ENCODE measurements at regions of chr2 and their contacts with region 1.

Region 1: GRCh38 chr2:100610381-100610831 is 47.6 kb downstream of the PDCL3 start:
- ATAC-seq: peak; percentile 96 to 98 (median 96)
- H3K4me3 ChIP-seq: no peak overlapping the region
- H3K27ac ChIP-seq: no peak overlapping the region
- H3K4me1 ChIP-seq: no peaks in the 10 kb centered on the region

Region 2: GRCh38 chr2:100703213-100703612 is 92.8 kb after region 1 on chr2:
- in situ Hi-C with region 1: loop called in 1 of 9 experiments (anchors 25 kb)
- ATAC-seq: no peak
- H3K4me3 ChIP-seq: no peak overlapping the region
- H3K27ac ChIP-seq: no peak overlapping the region
- H3K4me1 ChIP-seq: no peaks in the 10 kb centered on the region

Region 3: GRCh38 chr2:100984892-100985379 is 374.5 kb after region 1 on chr2:
- in situ Hi-C with region 1: loop called (anchors 10 to 25 kb)
- ATAC-seq: peak; percentile 71 to 91 (median 74)
- H3K4me3 ChIP-seq: no peak overlapping the region
- H3K27ac ChIP-seq: no peak overlapping the region
- H3K4me1 ChIP-seq: peaks cover 6 to 15% of the 10 kb centered on the region in 2 donors

Region 4: GRCh38 chr2:100992262-100992661 is 381.9 kb after region 1 on chr2:
- in situ Hi-C with region 1: loop called (anchors 10 to 25 kb)
- ATAC-seq: no peak
- H3K4me3 ChIP-seq: no peak overlapping the region
- H3K27ac ChIP-seq: no peak overlapping the region
- H3K4me1 ChIP-seq: no peaks in the 10 kb centered on the region

Region 5: DNA sequence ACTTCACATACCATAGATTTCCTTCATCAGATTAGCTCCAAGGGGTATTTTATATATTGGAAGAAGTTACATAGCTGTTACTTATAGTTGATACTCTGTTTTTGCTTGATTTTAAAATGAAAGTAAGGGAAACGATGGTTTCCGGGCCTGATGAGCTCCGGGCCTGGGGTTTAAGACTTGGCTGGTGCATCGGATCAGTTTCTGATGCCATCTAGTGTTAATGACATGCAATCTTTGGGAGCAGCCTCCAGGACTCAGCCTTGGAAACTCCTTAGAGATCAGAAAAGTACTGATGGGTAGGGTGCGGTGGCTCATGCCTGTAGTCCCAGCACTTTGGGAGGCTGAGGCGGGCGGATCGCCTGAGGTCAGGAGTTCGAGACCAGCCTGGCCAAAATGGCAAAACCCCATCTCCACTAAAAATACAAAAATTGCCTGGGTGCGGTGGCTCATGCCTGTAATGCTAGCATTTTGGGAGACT is 595.2 kb after region 1 on chr2:
- in situ Hi-C with region 1: loop called in 1 of 9 experiments (anchors 25 kb)
- ATAC-seq: peak; percentile 78 to 100 (median 92)
- H3K4me3 ChIP-seq: no peak overlapping the region
- H3K27ac ChIP-seq: no peak overlapping the region
- H3K4me1 ChIP-seq: no peaks in the 10 kb centered on the region

Measured in motor neuron (in vitro differentiated cells).